Calu3 (cell line): ENCODE measurements at regions of chr1 and their contacts with region 1.

Region 1: GRCh38 chr1:99180343-99180808 is 83.9 kb upstream of the PLPPR4 start:
- DNase-seq: peak; percentile 64
- H3K4me3 Mint-ChIP-seq: no peak overlapping the region
- H3K27ac Mint-ChIP-seq: no peak overlapping the region
- H3K4me1 Mint-ChIP-seq: no peaks in the 10 kb centered on the region
- H3K27me3 Mint-ChIP-seq: no peaks in the 10 kb centered on the region
- CTCF ChIP-seq: peak; percentile 65

Region 2: GRCh38 chr1:99315305-99315704 is 134.9 kb after region 1 on chr1:
- CTCF ChIA-PET with region 1: no interaction called
- intact Hi-C with region 1: no loop called
- DNase-seq: no peak
- H3K4me3 Mint-ChIP-seq: no peak overlapping the region
- H3K27ac Mint-ChIP-seq: no peak overlapping the region
- H3K4me1 Mint-ChIP-seq: no peaks in the 10 kb centered on the region
- H3K27me3 Mint-ChIP-seq: no peaks in the 10 kb centered on the region
- CTCF ChIP-seq: no peak

Region 3: DNA sequence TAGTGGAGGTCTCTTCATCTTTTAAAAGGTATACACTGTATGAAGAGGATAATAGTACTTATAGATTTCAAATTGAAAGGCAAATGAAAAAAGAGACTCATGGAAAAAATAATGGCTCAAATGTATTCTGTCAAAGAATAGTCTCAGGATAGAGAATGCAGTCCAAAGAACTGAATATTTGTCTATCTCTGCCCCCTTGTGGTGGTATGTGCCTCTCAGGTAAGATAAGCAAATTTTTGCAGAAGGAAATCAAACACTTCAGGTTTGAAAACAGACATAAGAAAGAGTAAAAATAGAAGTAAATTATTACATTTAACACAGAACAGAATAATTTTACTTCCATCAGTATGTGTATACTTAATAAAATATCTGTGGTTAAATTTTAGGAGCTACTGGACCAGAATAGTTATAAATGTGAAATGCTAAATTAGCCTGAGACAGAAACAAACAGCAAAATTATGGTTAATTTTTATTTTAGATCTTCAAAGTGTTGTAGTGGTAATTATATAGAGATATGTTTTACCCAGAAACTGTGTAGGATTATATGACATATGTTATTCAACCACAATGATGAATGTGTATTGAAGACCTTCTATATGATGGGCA is 301.1 kb after region 1 on chr1:
- CTCF ChIA-PET with region 1: no interaction called
- intact Hi-C with region 1: loop called (anchors 1 kb)
- DNase-seq: peak; percentile 47
- H3K4me3 Mint-ChIP-seq: no peak overlapping the region
- H3K27ac Mint-ChIP-seq: no peak overlapping the region
- H3K4me1 Mint-ChIP-seq: no peaks in the 10 kb centered on the region
- H3K27me3 Mint-ChIP-seq: no peaks in the 10 kb centered on the region
- CTCF ChIP-seq: peak; percentile 34

Region 4: DNA sequence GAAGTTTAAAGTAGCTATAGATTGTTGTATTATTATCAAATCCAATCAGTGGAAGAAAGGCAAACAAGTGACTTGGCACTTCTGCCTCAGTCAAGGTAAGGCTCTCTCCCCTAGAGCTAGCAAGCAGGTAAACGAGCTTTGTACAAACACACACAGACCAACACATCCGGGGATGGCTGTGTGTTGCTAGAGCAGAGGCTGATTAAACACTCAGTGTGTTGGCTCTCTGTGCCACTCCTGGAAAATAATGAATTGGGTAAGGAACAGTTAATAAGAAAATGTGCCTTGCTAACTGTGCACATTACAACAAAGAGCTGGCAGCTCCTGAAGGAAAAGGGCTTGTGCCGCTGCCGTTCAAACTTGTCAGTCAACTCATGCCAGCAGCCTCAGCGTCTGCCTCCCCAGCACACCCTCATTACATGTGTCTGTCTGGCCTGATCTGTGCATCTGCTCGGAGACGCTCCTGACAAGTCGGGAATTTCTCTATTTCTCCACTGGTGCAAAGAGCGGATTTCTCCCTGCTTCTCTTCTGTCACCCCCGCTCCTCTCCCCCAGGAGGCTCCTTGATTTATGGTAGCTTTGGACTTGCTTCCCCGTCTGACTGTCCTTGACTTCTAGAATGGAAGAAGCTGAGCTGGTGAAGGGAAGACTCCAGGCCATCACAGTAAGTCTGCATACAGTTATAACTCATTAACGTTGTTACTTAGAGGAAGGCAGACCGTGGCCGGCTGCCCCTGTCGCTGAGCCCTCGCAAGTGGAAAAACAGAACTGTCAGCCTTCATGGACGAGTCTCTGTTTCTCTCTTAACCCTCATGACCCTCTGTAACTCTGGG is 465.5 kb after region 1 on chr1 and contains the start of gene PALMD:
- CTCF ChIA-PET with region 1: no interaction called
- intact Hi-C with region 1: no loop called
- DNase-seq: peak; percentile 33
- H3K4me3 Mint-ChIP-seq: peak within 1 kb of the TSS; percentile 92
- H3K27ac Mint-ChIP-seq: peak within 1 kb of the TSS; percentile 94
- H3K4me1 Mint-ChIP-seq: peaks cover 29% of the 10 kb centered on the region
- H3K27me3 Mint-ChIP-seq: no peaks in the 10 kb centered on the region
- CTCF ChIP-seq: no peak
- total RNA-seq, gene PALMD: 6.8 and 19.2 TPM in 2 replicates

Region 5: DNA sequence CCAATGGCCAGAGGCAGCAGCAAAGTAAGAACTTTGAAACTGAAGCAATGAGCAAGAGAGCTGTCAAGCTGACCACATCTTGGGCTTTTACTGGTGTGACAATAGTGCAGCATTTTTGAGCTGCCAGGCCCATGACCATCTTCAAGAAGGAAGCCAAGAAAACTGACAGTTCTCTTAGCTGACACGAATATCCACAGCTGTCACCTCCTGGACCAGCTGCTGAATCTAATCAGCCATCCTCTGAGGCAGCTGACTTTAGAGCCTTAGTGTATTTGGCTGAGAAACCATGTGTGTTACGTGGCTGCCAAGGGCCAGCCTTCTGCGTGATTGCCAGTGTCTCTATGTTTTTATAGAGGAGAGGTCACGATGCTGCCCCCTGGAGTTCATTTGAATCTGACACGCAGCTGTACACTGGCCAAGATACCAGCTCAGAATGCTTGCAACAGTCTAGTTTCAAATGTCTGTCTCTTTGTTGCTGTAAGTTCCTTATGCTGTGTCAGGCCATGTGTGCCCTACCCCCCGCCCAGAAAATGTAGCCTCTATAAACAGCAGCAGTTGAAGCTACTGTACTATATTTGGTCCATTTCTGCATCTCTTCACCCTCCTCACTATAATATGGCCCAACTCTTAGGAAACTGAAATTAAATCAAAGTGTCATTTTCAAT is 505.3 kb after region 1 on chr1:
- CTCF ChIA-PET with region 1: no interaction called
- intact Hi-C with region 1: loop called (anchors 1 kb)
- DNase-seq: peak; percentile 70
- H3K4me3 Mint-ChIP-seq: no peak overlapping the region
- H3K27ac Mint-ChIP-seq: no peak overlapping the region
- H3K4me1 Mint-ChIP-seq: peaks cover 9% of the 10 kb centered on the region
- H3K27me3 Mint-ChIP-seq: no peaks in the 10 kb centered on the region
- CTCF ChIP-seq: peak; percentile 37

Region 6: DNA sequence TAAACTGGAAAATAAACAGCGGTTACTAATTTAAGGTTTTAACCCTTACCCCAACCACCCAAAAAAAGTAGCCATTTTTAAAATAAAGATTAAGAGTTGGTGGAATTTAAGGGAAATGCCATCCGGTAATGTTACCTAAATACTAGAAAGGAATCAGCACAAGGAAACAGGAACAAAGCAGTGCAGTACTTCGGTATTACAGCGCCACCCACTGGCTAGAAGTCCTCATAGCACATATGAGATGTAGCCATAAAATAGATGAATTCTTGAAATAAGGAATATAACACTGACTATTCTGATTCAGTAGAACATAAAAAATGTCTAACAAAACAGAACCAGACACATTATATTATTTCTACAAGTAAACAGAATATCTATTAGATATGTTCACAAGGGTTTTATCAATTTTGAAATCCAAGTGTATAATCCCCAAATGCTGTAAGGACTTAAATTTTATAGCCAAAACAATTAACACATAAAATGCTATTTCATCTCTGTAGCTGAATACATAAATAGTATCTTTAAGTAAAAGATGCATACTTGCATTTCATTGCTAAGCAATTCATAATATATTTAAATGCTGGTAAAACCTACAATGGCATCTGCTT is 527.3 kb after region 1 on chr1:
- CTCF ChIA-PET with region 1: no interaction called
- intact Hi-C with region 1: loop called (anchors 1 kb)
- DNase-seq: peak; percentile 60
- H3K4me3 Mint-ChIP-seq: no peak overlapping the region
- H3K27ac Mint-ChIP-seq: no peak overlapping the region
- H3K4me1 Mint-ChIP-seq: no peaks in the 10 kb centered on the region
- H3K27me3 Mint-ChIP-seq: no peaks in the 10 kb centered on the region
- CTCF ChIP-seq: peak; percentile 37